HAP-1 (cell line): ENCODE measurements at regions of chr2 and their contacts with region 1.

Region 1: GRCh38 chr2:222690564-222691200 is 19.2 kb downstream of the MOGAT1 start:
- DNase-seq: peak; percentile 65 to 88
- H3K4me3 ChIP-seq: no peak overlapping the region
- H3K4me1 ChIP-seq: no peaks in the 10 kb centered on the region
- H3K27me3 ChIP-seq: no peaks in the 10 kb centered on the region; the same call in 1 of the 2 replicates

Region 2: DNA sequence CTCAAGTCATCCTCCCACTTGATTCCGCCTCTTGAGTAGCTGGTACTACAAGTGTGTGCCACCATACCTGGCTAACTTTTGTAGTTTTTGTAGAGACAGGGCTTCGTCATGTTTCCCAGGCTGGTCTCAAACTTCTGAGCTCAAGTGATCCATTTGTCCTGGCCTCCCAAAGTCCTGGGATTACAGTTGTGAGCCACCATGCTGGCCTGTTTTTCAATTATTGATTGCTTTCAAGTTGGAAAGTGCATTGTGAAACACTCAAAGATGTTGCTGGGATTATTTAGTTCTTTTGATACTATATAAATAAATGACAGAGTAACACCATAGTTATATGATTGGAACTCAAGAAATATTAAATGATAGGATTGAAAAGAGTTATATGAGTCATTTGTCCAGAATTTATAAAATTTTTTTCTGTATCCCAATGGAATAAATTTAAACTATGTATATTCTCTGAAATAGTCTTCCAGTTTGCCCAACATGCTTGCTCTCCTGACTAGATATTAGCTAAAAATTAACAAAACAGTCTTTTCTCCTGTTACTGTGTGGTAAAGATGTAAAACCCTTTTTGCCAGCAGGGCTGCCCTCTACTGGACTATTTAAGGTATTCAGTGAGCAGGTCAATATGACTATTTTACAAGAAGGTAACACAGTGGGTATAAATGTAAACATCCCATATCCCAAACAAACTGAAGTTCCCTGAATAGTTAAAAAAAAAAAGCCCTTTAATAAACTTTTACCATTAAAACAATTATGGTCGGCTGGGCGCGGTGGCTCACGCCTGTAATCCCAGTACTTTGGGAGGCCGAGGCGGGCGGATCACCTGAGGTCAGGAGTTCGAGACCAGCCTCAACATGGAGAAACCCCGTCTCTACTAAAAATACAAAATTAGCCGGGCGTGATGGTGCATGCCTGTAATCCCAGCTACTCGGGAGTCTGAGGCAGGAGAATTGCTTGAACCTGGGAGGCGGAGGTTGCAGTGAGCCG is 212.8 kb after region 1 on chr2:
- in situ Hi-C with region 1: loop called (anchors 5 kb)
- DNase-seq: peak; percentile 50 to 52
- H3K4me3 ChIP-seq: no peak overlapping the region
- H3K4me1 ChIP-seq: peaks cover 8% of the 10 kb centered on the region
- H3K27me3 ChIP-seq: no peaks in the 10 kb centered on the region